Sigmoid colon (tissue), 7 donors: ENCODE measurements at regions of chr10 and their contacts with region 1.

Region 1: GRCh38 chr10:124259139-124259825 is 159.4 kb downstream of the OAT start:
- DNase-seq: peak; percentile 50
- H3K4me3 ChIP-seq: no peak overlapping the region
- H3K27ac ChIP-seq: no peak overlapping the region
- H3K4me1 ChIP-seq: peaks cover 0 to 46% (median 34%) of the 10 kb centered on the region in 4 donors
- H3K27me3 ChIP-seq: no peaks in the 10 kb centered on the region
- CTCF ChIP-seq: no peak
- EP300 ChIP-seq: no peak
- POLR2A ChIP-seq: no peak

Region 2: GRCh38 chr10:123994417-123995081 is 264.7 kb before region 1 on chr10:
- intact Hi-C with region 1: loop called (anchors 2 kb)
- DNase-seq: peak; percentile 93
- H3K4me3 ChIP-seq: peak overlapping the region in 3 of 4 donors; percentile 21 to 35 (median 22)
- H3K27ac ChIP-seq: peak overlapping the region in 3 of 4 donors; percentile 60 to 71 (median 69)
- H3K4me1 ChIP-seq: peaks cover 0 to 31% (median 26%) of the 10 kb centered on the region in 4 donors
- H3K27me3 ChIP-seq: peaks cover 13 to 39% (median 18%) of the 10 kb centered on the region in 3 donors
- CTCF ChIP-seq: peak; percentile 96 to 100 (median 99)
- EP300 ChIP-seq: no peak
- POLR2A ChIP-seq: no peak

Region 3: DNA sequence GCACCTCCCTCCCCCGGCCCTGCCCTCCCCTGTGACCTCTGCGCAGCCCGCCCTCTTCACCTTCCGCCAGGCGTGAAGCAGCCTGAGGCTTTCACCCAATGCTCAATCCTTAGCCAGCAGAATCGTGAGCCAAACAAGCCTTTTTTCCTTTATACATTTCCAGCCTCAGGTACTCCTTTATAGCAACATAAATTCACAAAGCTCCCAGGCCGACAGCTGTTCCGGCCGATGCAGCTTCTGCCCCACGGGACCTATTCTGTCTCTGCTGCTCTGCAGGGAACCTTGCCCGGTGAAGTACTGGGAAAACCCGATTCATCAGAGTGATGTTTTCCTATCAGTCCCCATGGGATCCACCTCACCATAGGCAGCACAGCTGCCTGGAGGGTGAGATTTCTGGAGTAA is 253.3 kb before region 1 on chr10:
- intact Hi-C with region 1: loop called (anchors 2 kb)
- DNase-seq: peak; percentile 90
- H3K4me3 ChIP-seq: no peak overlapping the region
- H3K27ac ChIP-seq: peak overlapping the region; percentile 85 to 90 (median 89)
- H3K4me1 ChIP-seq: peaks cover 0 to 74% (median 69%) of the 10 kb centered on the region in 4 donors
- H3K27me3 ChIP-seq: no peaks in the 10 kb centered on the region
- CTCF ChIP-seq: no peak
- EP300 ChIP-seq: peak in 1 of 4 donors; percentile 15
- POLR2A ChIP-seq: no peak

Region 4: GRCh38 chr10:124092860-124093773 is 166.2 kb before region 1 on chr10 and contains the start of gene CHST15:
- intact Hi-C with region 1: loop called (anchors 5 kb)
- DNase-seq: peak; percentile 89
- H3K4me3 ChIP-seq: peak within 1 kb of the TSS; percentile 59 to 73 (median 66)
- H3K27ac ChIP-seq: peak within 1 kb of the TSS; percentile 90 to 93 (median 91)
- H3K4me1 ChIP-seq: peaks cover 0 to 60% (median 54%) of the 10 kb centered on the region in 4 donors
- H3K27me3 ChIP-seq: no peaks in the 10 kb centered on the region
- CTCF ChIP-seq: peak in 1 of 4 experiments; percentile 22
- EP300 ChIP-seq: no peak
- POLR2A ChIP-seq: peak; percentile 47 to 76
- total RNA-seq, gene CHST15: 29.9 to 57.9 (median 43.8) TPM

Region 5: GRCh38 chr10:124106241-124106879 is 152.9 kb before region 1 on chr10:
- intact Hi-C with region 1: loop called (anchors 5 kb)
- DNase-seq: peak; percentile 93
- H3K4me3 ChIP-seq: peak overlapping the region in 1 of 4 donors; percentile 2
- H3K27ac ChIP-seq: peak overlapping the region; percentile 82 to 84 (median 83)
- H3K4me1 ChIP-seq: peaks cover 0 to 37% (median 34%) of the 10 kb centered on the region in 4 donors
- H3K27me3 ChIP-seq: no peaks in the 10 kb centered on the region
- CTCF ChIP-seq: no peak
- EP300 ChIP-seq: no peak
- POLR2A ChIP-seq: no peak

Region 6: DNA sequence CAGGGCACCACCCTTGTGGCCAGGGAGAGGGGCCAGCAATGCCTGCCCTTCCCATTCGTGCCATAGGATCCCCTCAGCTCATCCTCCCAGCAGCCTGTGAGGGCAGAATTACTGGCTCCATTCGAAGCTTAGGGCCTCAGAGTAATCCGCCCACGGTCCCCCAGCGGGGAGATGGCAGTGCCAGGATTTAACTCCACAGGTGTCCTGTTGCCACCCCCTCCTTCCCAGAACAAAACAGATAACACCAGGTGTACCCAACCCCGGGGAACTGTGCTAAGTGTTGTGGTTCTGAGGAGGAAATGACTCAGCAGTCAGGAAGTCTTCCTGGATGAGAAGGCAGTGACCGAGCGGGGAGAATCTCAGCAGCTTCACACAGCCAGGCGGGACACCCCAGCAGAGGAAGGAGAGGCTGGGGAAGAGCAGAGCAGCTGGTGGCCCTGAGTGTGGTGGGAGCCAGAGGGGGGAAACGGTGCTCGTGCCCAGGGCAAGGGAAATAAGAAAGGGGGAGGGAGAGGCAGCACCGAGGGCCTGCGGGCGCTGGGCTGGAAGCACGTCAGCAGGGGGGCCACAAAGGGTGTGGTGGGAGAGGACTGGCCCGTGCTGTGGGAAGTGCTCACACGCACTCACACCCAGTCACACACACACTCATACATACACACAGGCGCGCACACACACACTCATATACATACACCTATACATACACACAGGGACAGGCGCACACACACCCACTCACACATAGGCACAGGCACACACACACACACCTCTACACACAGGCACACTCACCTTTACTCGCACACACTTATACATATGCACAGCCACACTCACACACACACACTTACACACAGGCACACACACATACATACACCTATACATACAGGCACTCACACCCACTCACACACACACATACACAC is 106.1 kb before region 1 on chr10:
- intact Hi-C with region 1: loop called (anchors 5 kb)
- DNase-seq: peak; percentile 75
- H3K4me3 ChIP-seq: no peak overlapping the region
- H3K27ac ChIP-seq: peak overlapping the region; percentile 77 to 80 (median 77)
- H3K4me1 ChIP-seq: peaks cover 0 to 67% (median 57%) of the 10 kb centered on the region in 4 donors
- H3K27me3 ChIP-seq: no peaks in the 10 kb centered on the region
- CTCF ChIP-seq: no peak
- EP300 ChIP-seq: peak in 1 of 4 donors; percentile 4
- POLR2A ChIP-seq: no peak

Region 7: GRCh38 chr10:124240839-124241291 is 18.4 kb before region 1 on chr10:
- intact Hi-C with region 1: no loop called
- DNase-seq: peak; percentile 53
- H3K4me3 ChIP-seq: no peak overlapping the region
- H3K27ac ChIP-seq: no peak overlapping the region
- H3K4me1 ChIP-seq: no peaks in the 10 kb centered on the region
- H3K27me3 ChIP-seq: no peaks in the 10 kb centered on the region
- CTCF ChIP-seq: no peak
- EP300 ChIP-seq: no peak
- POLR2A ChIP-seq: no peak

Region 8: DNA sequence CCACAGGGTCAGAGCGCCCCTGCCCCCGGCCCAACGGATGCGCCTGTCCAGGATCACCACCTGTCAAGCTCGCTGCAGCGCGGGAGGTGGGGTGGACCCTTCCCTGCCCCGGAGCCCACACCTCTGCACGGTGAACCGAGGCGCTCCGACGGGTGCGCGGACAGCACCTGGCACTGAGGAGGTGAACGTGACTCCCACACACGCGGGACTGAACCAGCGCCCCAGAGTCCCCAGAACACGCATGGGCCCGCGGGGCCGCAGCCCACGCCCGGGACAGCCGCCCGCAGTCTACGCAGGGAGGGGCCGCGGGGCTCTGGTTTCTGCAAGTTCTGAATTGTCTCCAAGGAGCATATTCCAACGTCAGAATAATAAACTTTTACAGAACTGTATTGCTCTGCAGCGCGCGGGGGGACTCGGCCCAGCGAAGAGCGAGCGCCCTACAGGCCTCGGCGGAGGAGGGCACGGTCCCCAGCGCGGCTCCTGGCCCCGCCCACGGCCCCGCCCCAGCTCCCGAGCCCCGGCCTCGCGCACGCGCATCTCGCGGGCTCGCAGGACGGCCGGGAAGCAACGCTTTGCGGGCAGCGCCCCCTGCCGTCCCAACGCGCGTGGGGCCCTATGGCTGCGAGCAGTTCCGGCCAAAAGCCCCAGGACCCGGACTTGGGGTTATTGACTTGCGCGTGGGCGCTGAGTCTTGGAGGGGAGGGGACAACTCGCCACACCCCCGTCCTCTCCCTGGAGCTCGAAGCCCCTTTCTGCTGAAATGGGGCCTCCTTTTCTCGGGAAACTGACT is 129.7 kb after region 1 on chr10:
- intact Hi-C with region 1: loop called (anchors 5 kb)
- DNase-seq: peak; percentile 93
- H3K4me3 ChIP-seq: peak overlapping the region; percentile 35 to 55 (median 50)
- H3K27ac ChIP-seq: peak overlapping the region; percentile 50 to 72 (median 68)
- H3K4me1 ChIP-seq: peaks cover 0 to 15% (median 11%) of the 10 kb centered on the region in 4 donors
- H3K27me3 ChIP-seq: no peaks in the 10 kb centered on the region
- CTCF ChIP-seq: peak; percentile 78 to 97 (median 86)
- EP300 ChIP-seq: no peak
- POLR2A ChIP-seq: no peak